Pancreas (tissue), 10 donors: ENCODE measurements at regions of chr10 and their contacts with region 1.

Region 1: DNA sequence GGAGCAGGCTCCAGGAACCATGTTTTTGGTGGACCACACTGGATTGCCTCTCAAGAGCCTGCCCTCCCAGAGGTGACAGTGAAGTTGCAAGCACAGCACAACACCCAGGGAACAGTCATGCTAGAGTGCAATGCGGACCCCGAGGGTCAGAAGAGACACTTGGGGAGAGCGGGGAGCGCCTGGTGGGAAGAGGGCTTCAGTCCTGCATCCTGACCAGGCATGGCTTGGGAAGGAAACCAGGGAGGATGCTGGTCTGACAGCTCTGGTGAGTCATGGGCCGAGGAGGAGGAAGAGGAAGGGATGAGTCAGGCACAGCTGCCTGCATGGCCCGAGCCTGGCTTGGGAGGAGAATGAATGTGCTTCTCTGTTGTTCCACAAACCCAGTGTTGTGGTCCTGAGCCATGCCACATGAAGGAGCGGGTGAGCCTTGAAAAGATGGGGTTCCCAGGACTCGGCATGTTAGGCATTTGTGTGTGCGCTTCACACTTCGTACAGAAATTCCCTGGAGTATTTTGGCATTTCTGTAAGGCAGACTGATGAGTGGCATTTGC is 29.5 kb upstream of the ANKRD2 start:
- DNase-seq: peak in 4 of 6 donors; percentile 23 to 61 (median 49)
- ATAC-seq: peak; percentile 52 to 91 (median 78)
- H3K4me3 ChIP-seq: no peak overlapping the region
- H3K27ac ChIP-seq: peak overlapping the region in 3 of 4 donors; percentile 16 to 68 (median 64)
- H3K4me1 ChIP-seq: peaks cover 0 to 12% (median 0%) of the 10 kb centered on the region in 3 donors
- H3K27me3 ChIP-seq: no peaks in the 10 kb centered on the region
- CTCF ChIP-seq: no peak

Region 2: DNA sequence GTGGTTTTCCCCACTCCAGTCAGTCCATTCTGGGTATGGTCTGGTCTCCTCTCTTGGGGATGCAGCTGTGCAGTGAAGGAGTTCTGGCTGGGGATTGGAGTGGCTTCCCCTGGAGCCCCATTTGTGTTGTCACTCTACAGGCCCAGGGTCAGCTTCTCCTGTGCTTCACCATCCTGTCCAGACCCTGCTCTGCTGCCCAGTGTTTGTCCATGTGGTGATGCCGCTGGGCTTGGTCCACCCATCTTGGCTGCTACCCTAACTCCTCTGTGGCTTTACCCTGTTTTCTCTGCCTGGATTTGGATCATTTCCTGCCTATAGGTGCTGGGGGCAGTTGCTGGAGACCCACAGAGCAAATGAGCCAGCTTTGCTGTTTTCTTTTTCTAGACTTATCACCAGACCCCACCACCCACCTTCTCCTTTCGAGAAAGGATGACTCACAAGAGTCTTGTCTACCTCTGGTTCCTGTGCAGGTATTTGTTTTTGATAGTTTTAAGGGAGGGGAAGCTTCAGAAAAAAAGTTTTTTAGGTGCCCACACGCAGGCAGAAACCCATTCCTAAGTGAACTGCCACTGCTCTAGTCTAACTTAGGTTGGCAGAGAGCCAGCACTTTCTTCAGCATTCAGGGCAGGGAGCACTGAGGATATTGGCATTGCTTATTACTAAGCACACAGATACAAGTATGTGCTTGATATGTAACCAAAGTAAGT is 88.6 kb before region 1 on chr10:
- intact Hi-C with region 1: loop called in 1 of 3 experiments (anchors 10 kb)
- DNase-seq: peak in 1 of 6 donors; percentile 33
- ATAC-seq: peak; percentile 23 to 65 (median 58)
- H3K4me3 ChIP-seq: no peak overlapping the region
- H3K27ac ChIP-seq: no peak overlapping the region
- H3K4me1 ChIP-seq: no peaks in the 10 kb centered on the region
- H3K27me3 ChIP-seq: no peaks in the 10 kb centered on the region
- CTCF ChIP-seq: no peak

Region 3: DNA sequence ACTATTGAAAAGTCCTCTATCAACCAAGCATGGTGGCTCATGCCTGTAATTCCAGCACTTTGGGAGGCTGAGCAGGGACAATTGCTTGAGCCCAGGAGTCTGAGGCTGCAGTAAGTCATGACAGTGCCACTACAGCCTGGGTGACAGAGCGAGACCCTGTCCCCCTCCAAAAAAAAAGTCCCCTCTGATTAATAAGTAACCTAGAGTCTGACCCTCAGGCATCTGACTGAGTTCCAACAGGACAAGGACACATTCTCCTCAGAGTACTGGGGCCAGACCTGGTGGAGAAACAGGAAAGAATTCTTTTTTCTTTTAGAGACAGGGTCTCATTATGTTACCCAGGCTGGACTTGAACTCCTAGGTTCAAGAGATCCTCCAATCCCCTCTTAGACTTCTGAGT is 80.2 kb after region 1 on chr10:
- intact Hi-C with region 1: no loop called
- DNase-seq: no peak
- ATAC-seq: peak in 2 of 4 donors; percentile 40 to 63
- H3K4me3 ChIP-seq: no peak overlapping the region
- H3K27ac ChIP-seq: peak overlapping the region in 1 of 4 donors; percentile 27
- H3K4me1 ChIP-seq: peaks cover 0 to 3% (median 0%) of the 10 kb centered on the region in 3 donors
- H3K27me3 ChIP-seq: no peaks in the 10 kb centered on the region
- CTCF ChIP-seq: no peak

Region 4: GRCh38 chr10:97792141-97792721 is 249.1 kb after region 1 on chr10:
- intact Hi-C with region 1: no loop called
- DNase-seq: peak; percentile 81 to 91 (median 89)
- ATAC-seq: peak; percentile 56 to 70 (median 63)
- H3K4me3 ChIP-seq: peak overlapping the region in 1 of 4 donors; percentile 11
- H3K27ac ChIP-seq: peak overlapping the region; percentile 59 to 88 (median 76)
- H3K4me1 ChIP-seq: peaks cover 22 to 35% (median 31%) of the 10 kb centered on the region in 3 donors
- H3K27me3 ChIP-seq: no peaks in the 10 kb centered on the region
- CTCF ChIP-seq: peak; percentile 83 to 92 (median 88)